GM12878 (cell line): ENCODE measurements at regions of chr6 and their contacts with region 1.

Region 1: GRCh38 chr6:137102851-137103492 is 58.2 kb upstream of the IL20RA start:
- DNase-seq: peak; percentile 100
- ATAC-seq: peak; percentile 82
- H3K4me3 ChIP-seq: no peak overlapping the region
- H3K27ac ChIP-seq: peak overlapping the region; percentile 98
- H3K4me1 ChIP-seq: peaks cover 73% of the 10 kb centered on the region
- H3K27me3 ChIP-seq: no peaks in the 10 kb centered on the region
- CTCF ChIP-seq: no peak
- EP300 ChIP-seq: peak; percentile 97
- POLR2A ChIP-seq: peak; percentile 65
- RAD21 ChIP-seq: peak; percentile 44

Region 2: DNA sequence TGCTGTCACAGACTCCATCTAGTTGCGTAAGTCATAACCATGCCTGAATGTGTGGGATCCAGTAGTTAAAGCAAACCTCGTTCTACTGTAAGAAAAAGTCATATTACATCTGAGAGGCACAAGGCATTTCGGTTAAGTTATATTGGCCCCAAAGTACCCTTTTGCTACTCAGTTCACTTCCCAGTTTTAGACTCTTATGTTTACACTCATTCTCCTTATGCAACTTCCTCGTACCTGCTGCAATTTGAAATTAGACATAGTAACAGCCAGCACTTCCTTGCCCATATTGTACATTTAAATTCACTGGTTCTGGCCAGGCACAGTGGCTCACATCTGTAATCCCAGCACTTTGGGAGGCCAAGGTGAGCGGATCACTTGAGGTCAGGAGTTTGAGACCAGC is 243.5 kb before region 1 on chr6:
- CTCF ChIA-PET with region 1: no interaction called
- POLR2A ChIA-PET with region 1: no interaction called
- RAD21 ChIA-PET with region 1: no interaction called
- SMC1A ChIA-PET with region 1: no interaction called
- in situ Hi-C with region 1: no loop called
- intact Hi-C with region 1: no loop called
- DNase-seq: no peak
- ATAC-seq: no peak
- H3K4me3 ChIP-seq: no peak overlapping the region
- H3K27ac ChIP-seq: no peak overlapping the region
- H3K4me1 ChIP-seq: no peaks in the 10 kb centered on the region
- H3K27me3 ChIP-seq: no peaks in the 10 kb centered on the region
- CTCF ChIP-seq: no peak
- EP300 ChIP-seq: no peak
- POLR2A ChIP-seq: no peak
- RAD21 ChIP-seq: no peak

Region 3: DNA sequence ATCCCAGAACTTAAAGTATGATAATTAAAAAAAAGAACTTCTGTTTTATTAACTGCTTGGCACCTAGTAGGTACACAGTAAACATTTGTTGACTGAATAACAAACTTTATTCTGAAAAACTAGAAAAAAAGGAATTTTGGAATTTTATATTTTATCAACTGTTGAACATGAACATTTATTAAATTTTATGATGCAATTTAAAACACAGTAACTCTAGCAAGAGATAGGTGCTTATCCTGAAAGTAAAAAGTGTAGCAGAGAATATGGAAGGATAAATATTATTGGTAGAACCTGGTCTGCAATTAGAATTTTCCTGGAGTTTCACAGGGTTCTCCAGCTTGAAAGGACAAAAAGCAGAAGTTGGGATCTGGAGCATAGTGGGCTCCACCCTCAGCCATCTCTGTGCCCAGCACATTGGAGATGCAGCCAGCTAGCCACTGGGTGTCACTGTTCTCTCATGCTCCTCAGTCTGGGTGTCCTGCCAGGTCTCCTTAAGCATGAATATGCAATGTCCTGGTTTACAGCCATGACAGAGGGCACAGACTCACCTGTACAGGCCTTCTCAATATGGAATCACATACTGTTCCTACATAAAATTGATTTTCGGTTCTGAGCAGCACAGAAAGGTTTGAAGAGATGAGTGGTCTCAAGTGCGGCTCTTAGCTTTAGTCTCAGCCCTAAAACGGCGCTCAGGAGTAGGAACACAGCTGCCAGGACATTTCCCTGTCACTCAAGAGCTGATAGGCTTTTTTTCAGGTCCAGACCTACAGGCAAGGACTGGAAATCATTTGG is 26.5 kb before region 1 on chr6:
- CTCF ChIA-PET with region 1: interaction called, 71 read pairs
- POLR2A ChIA-PET with region 1: interaction called, 5 read pairs
- RAD21 ChIA-PET with region 1: interaction called, 80 read pairs
- SMC1A ChIA-PET with region 1: interaction called, 110 read pairs
- in situ Hi-C with region 1: no loop called
- intact Hi-C with region 1: no loop called
- DNase-seq: no peak
- ATAC-seq: peak; percentile 100
- H3K4me3 ChIP-seq: no peak overlapping the region
- H3K27ac ChIP-seq: peak overlapping the region; percentile 42
- H3K4me1 ChIP-seq: peaks cover 7% of the 10 kb centered on the region
- H3K27me3 ChIP-seq: no peaks in the 10 kb centered on the region
- CTCF ChIP-seq: peak; percentile 90 to 96 (median 93); a peak in 5 of 6 replicates
- EP300 ChIP-seq: no peak
- POLR2A ChIP-seq: no peak
- RAD21 ChIP-seq: peak; percentile 96

Region 4: DNA sequence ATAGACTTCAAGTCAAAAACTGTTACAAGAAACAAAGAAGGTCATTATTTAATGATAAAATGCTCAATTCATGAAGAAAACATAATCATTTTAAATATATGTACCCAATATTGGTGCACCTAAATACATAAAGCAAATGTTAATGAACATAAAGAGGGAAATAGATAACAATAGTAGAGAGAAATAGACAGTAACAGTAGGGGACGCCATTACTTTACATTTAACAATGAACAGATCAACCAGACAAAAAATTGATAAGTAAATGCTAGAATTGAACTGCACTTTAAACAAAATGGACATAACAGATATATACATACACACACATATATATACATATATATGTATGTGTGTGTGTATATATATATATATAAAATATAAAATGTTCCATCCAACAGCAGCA is 33.1 kb after region 1 on chr6:
- CTCF ChIA-PET with region 1: no interaction called
- POLR2A ChIA-PET with region 1: interaction called, 3 read pairs
- RAD21 ChIA-PET with region 1: no interaction called
- SMC1A ChIA-PET with region 1: interaction called, 11 read pairs
- in situ Hi-C with region 1: no loop called
- intact Hi-C with region 1: no loop called
- DNase-seq: no peak
- ATAC-seq: no peak
- H3K4me3 ChIP-seq: no peak overlapping the region
- H3K27ac ChIP-seq: no peak overlapping the region
- H3K4me1 ChIP-seq: no peaks in the 10 kb centered on the region
- H3K27me3 ChIP-seq: no peaks in the 10 kb centered on the region
- CTCF ChIP-seq: no peak
- EP300 ChIP-seq: no peak
- POLR2A ChIP-seq: no peak
- RAD21 ChIP-seq: no peak

Region 5: GRCh38 chr6:137210903-137211302 is 107.9 kb after region 1 on chr6:
- CTCF ChIA-PET with region 1: interaction called, 3 read pairs
- POLR2A ChIA-PET with region 1: interaction called, 8 read pairs
- RAD21 ChIA-PET with region 1: interaction called, 54 read pairs
- SMC1A ChIA-PET with region 1: interaction called, 89 read pairs
- in situ Hi-C with region 1: loop called (anchors 5 kb)
- intact Hi-C with region 1: no loop called
- DNase-seq: no peak
- ATAC-seq: no peak
- H3K4me3 ChIP-seq: no peak overlapping the region
- H3K27ac ChIP-seq: no peak overlapping the region
- H3K4me1 ChIP-seq: peaks cover 9% of the 10 kb centered on the region; the same call in 1 of the 2 replicates
- H3K27me3 ChIP-seq: no peaks in the 10 kb centered on the region
- CTCF ChIP-seq: no peak
- EP300 ChIP-seq: no peak
- POLR2A ChIP-seq: no peak
- RAD21 ChIP-seq: no peak

Region 6: DNA sequence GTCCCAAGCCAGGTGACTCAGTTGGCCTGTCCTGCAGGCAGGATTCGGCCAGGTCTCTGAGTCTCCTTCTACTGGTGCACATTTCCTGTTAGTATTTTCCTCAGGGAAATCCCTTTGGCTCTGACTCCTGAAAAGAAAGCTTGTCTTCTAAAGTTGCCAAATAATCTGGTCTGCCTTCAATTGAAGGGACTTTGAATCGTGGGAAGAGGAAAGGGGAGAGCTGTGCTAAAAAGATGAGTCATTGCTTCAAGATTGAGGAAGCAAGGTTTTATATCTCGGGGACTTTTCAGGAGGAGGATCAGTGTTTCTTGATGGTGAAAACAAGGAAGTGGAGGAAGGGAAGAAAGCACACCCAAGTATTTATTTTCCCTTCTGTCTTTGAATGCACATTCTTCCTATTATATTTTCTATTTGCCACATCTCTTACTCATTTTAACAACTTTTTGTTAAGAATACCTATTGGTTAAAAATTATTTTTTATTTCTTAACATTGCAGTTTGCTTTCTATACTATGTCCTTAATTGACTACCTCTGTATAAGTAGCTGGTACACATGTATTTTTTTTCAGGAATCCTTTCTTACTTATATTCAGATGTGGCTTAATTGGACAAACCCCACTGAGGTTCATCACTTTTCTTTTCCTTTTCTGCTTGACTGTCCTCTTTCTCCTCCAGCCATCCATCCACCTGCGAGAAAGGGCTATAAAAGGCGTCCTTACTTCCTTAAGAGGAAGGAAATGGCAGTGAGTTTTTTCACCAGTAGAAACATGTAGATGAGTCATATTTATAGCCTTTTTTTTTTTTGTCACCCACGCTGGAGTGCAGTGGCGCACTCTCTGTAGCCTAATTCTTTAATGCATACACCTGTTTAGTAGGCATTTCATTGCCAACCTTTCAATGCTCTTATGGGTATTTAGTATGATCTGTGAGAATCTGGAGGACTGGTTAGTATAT is 131.2 kb after region 1 on chr6:
- CTCF ChIA-PET with region 1: interaction called, 4 read pairs
- POLR2A ChIA-PET with region 1: interaction called, 8 read pairs
- RAD21 ChIA-PET with region 1: interaction called, 68 read pairs
- SMC1A ChIA-PET with region 1: interaction called, 24 read pairs
- in situ Hi-C with region 1: no loop called
- intact Hi-C with region 1: no loop called
- DNase-seq: no peak
- ATAC-seq: peak; percentile 79
- H3K4me3 ChIP-seq: peak overlapping the region; percentile 28; the same call in 1 of the 2 replicates
- H3K27ac ChIP-seq: peak overlapping the region; percentile 76
- H3K4me1 ChIP-seq: peaks cover 52% of the 10 kb centered on the region
- H3K27me3 ChIP-seq: no peaks in the 10 kb centered on the region
- CTCF ChIP-seq: no peak
- EP300 ChIP-seq: peak in 1 of 2 experiments; percentile 60; a peak in 1 of 4 replicates
- POLR2A ChIP-seq: no peak
- RAD21 ChIP-seq: no peak

Region 7: DNA sequence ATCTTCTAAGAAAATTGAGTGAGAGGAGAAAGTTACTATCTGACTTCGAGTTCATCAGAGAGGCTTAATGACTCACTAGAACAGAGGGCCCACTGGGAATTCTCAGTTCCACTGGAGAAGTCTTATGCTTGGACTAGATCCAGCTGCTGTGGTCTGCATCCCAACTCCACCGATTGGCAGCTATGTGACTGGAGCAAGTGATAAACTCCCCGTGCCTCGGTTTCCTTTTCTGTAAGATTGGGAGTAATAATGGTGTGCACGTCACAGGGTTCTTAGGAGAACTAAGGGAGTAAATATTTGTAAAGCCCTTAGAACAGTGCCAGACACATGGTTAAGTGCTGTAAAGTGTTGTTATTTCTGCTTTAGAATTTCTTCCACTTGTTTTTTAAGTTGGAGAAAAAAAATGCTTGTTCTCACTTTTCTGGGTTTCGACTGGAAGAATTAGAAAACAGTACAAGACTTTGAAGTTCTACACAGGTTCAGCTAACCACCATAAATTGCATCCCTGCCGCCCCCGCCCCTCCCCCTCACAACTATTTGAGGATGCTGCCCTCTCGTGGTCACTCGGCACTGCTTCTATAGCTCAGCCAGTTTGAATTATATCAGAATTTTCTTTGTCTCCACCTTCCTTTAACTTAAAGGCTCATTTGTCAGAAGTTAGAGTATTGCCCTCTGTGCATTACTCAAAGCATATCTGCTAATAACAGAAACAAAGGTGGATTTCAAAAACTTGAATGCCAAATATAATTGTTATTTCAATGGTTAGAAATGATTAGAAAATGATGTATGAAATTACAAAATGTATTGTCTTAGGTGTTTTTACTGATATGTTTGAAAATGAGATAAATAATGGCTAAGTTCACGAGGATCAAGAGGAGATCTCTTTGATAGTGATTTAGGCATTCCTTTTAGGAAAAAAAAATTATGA is 211.2 kb after region 1 on chr6:
- CTCF ChIA-PET with region 1: interaction called, 11 read pairs
- POLR2A ChIA-PET with region 1: no interaction called
- RAD21 ChIA-PET with region 1: interaction called, 13 read pairs
- SMC1A ChIA-PET with region 1: interaction called, 80 read pairs
- in situ Hi-C with region 1: no loop called
- intact Hi-C with region 1: no loop called
- DNase-seq: peak; percentile 43
- ATAC-seq: peak; percentile 97
- H3K4me3 ChIP-seq: no peak overlapping the region
- H3K27ac ChIP-seq: no peak overlapping the region
- H3K4me1 ChIP-seq: peaks cover 10% of the 10 kb centered on the region
- H3K27me3 ChIP-seq: no peaks in the 10 kb centered on the region
- CTCF ChIP-seq: peak; percentile 66 to 90 (median 79)
- EP300 ChIP-seq: no peak
- POLR2A ChIP-seq: no peak
- RAD21 ChIP-seq: peak; percentile 99